ENCODE measurements at regions of chr6 and their contacts with region 1.

Region 1: GRCh38 chr6:26025894-26026832 is 61.1 kb upstream of the HFE start:
- DNase-seq: peak; percentile 76
- ATAC-seq: peak; percentile 39
- H3K4me3 Mint-ChIP-seq: peak overlapping the region; percentile 96
- H3K27ac Mint-ChIP-seq: peak overlapping the region; percentile 99
- H3K4me1 Mint-ChIP-seq: peaks cover 35% of the 10 kb centered on the region
- H3K27me3 Mint-ChIP-seq: peaks cover 2% of the 10 kb centered on the region
- CTCF ChIP-seq: no peak

Region 2: DNA sequence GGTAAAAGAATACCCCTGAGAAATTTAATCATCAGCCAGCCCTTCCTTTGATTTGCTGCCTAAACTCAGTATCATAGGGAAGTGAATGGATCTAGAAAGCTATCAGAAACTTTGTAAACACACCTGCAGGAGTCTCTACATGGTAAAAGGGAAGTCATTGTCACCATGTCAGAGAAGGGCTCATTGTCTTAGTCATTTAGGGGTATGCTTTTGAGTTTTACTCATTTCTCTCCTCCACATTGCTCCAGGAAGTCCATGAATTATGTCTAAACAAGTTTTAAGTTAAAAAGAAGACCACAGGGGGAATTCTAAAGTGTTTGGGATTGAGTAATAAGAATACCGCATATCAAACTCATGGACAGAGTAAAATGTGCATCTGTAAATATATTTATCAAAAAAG is 196.8 kb before region 1 on chr6:
- CTCF ChIA-PET with region 1: no interaction called
- POLR2A ChIA-PET with region 1: no interaction called
- intact Hi-C with region 1: no loop called
- DNase-seq: no peak
- ATAC-seq: no peak
- H3K4me3 Mint-ChIP-seq: no peak overlapping the region
- H3K27ac Mint-ChIP-seq: no peak overlapping the region
- H3K4me1 Mint-ChIP-seq: no peaks in the 10 kb centered on the region
- H3K27me3 Mint-ChIP-seq: peaks cover 22% of the 10 kb centered on the region
- CTCF ChIP-seq: no peak

Region 3: GRCh38 chr6:26003102-26003694 is 23.0 kb before region 1 on chr6:
- CTCF ChIA-PET with region 1: interaction called, 17 read pairs
- POLR2A ChIA-PET with region 1: interaction called, 34 read pairs
- intact Hi-C with region 1: no loop called
- DNase-seq: no peak
- ATAC-seq: peak; percentile 49
- H3K4me3 Mint-ChIP-seq: no peak overlapping the region
- H3K27ac Mint-ChIP-seq: no peak overlapping the region
- H3K4me1 Mint-ChIP-seq: no peaks in the 10 kb centered on the region
- H3K27me3 Mint-ChIP-seq: no peaks in the 10 kb centered on the region
- CTCF ChIP-seq: peak; percentile 39

Region 4: DNA sequence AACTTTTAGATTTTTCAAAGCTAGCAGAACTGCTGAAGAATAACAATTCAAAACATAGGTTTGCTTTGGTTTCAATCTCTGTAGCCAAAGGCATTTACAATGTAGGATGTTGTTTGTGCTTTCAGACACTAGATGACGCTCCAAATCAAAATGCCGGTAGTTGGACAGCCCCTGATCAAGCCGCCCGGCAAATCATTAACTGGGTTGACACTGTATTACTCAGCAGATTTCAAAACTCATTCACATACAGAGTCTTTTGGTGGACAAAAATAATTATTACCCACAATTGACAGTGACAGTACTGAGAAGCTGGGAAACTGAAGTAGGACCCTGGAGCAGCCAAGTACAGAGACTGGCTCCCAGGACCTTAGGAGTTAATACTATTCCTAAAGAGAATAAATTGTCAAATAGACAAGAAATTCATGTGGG is 39.8 kb after region 1 on chr6:
- CTCF ChIA-PET with region 1: interaction called, 6 read pairs
- POLR2A ChIA-PET with region 1: interaction called, 3 read pairs
- intact Hi-C with region 1: loop called (anchors 1 kb)
- DNase-seq: no peak
- ATAC-seq: peak; percentile 97
- H3K4me3 Mint-ChIP-seq: no peak overlapping the region
- H3K27ac Mint-ChIP-seq: peak overlapping the region; percentile 35
- H3K4me1 Mint-ChIP-seq: peaks cover 8% of the 10 kb centered on the region
- H3K27me3 Mint-ChIP-seq: peaks cover 3% of the 10 kb centered on the region
- CTCF ChIP-seq: peak; percentile 39

Region 5: GRCh38 chr6:26183581-26184366 is 157.6 kb after region 1 on chr6:
- CTCF ChIA-PET with region 1: no interaction called
- POLR2A ChIA-PET with region 1: interaction called, 15 read pairs
- intact Hi-C with region 1: no loop called
- DNase-seq: peak; percentile 60
- ATAC-seq: peak; percentile 86
- H3K4me3 Mint-ChIP-seq: peak overlapping the region; percentile 98
- H3K27ac Mint-ChIP-seq: peak overlapping the region; percentile 91
- H3K4me1 Mint-ChIP-seq: peaks cover 30% of the 10 kb centered on the region
- H3K27me3 Mint-ChIP-seq: no peaks in the 10 kb centered on the region
- CTCF ChIP-seq: no peak

Region 6: DNA sequence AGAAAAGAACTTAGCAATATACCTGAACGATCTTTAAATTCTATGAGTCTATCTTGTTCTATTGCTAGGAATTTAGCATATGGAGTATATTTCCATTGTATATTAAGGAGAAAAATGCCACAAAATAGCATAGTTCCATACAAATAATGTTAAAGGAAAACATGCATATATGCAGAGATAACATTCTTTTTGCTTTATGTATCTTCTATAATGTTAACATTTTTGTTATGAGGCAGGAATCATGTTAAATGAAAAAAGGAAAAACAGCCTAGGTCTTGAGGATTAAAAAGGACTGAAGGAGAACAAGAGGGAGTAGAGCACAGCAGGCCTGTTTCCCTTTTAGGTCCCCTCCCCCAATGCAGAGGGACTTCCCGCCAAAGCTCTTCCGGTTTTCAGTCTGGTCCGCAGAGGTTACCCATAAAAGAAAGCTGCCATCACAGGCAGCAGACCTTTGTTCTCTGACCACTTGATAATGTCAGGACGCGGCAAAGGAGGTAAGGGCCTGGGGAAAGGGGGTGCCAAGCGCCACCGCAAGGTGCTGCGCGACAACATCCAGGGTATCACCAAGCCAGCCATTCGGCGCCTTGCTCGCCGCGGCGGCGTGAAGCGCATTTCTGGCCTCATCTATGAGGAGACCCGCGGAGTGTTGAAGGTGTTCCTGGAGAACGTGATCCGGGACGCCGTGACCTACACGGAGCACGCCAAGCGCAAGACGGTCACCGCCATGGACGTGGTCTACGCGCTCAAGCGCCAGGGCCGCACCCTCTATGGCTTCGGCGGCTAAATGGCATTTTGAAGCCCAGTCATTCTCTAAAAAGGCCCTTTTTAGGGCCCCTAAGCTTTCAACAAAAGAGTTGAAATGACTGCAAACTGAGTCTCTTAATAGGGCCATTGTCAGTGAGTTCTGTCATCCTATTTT is 1112.9 kb after region 1 on chr6:
- CTCF ChIA-PET with region 1: no interaction called
- POLR2A ChIA-PET with region 1: interaction called, 17 read pairs
- intact Hi-C with region 1: loop called (anchors 1 kb)
- DNase-seq: peak; percentile 59
- ATAC-seq: peak; percentile 82
- H3K4me3 Mint-ChIP-seq: peak overlapping the region; percentile 97
- H3K27ac Mint-ChIP-seq: peak overlapping the region; percentile 98
- H3K4me1 Mint-ChIP-seq: peaks cover 62% of the 10 kb centered on the region
- H3K27me3 Mint-ChIP-seq: no peaks in the 10 kb centered on the region
- CTCF ChIP-seq: no peak

Region 7: DNA sequence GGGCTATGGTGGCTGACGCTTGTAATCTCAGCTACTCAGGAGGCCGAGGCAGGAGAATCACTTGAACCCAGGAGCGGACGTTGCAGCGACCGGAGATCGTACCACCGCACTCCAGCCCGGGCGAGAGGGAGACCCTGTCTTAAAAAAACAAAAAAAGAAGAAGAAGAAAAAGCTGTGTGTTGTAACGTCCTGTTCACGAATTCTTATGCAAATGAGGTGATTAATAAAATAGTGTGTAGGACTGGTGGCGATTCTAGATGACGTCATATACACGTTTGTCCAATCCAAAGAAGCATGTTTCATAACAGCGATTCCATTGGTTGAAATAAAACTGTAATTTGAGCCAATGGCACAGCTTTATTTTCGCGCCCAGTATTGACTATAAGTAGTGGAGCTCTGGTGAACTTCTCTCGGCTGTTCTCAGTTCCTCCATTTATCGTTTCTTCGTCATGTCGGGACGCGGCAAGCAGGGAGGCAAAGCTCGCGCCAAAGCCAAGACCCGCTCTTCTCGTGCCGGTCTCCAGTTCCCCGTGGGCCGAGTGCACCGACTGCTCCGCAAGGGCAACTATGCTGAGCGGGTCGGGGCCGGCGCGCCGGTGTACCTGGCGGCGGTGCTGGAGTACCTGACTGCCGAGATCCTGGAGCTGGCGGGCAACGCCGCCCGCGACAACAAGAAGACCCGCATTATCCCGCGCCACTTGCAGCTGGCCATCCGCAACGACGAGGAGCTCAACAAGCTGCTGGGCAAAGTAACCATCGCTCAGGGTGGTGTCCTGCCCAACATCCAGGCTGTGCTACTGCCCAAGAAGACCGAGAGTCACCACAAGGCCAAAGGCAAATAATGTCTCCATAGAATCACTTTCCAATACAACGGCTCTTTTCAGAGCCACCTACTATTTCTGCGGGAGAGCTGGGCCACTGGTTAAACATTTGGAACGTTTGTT is 1839.0 kb after region 1 on chr6:
- CTCF ChIA-PET with region 1: no interaction called
- POLR2A ChIA-PET with region 1: interaction called, 38 read pairs
- intact Hi-C with region 1: no loop called
- DNase-seq: peak; percentile 68
- ATAC-seq: peak; percentile 85
- H3K4me3 Mint-ChIP-seq: peak overlapping the region; percentile 98
- H3K27ac Mint-ChIP-seq: peak overlapping the region; percentile 99
- H3K4me1 Mint-ChIP-seq: peaks cover 48% of the 10 kb centered on the region
- H3K27me3 Mint-ChIP-seq: no peaks in the 10 kb centered on the region
- CTCF ChIP-seq: no peak

Measured in activated B cell treated with CpG ODN at 0.5 μM for 24 hours (primary cell).